Ovary (tissue), 10 donors: ENCODE measurements at regions of chr17 and their contacts with region 1.

Region 1: GRCh38 chr17:60639019-60639330 is 38.7 kb upstream of the BCAS3 start:
- DNase-seq: no peak
- H3K4me3 ChIP-seq: no peak overlapping the region
- H3K27ac ChIP-seq: no peak overlapping the region
- H3K4me1 ChIP-seq: no peaks in the 10 kb centered on the region
- H3K27me3 ChIP-seq: no peaks in the 10 kb centered on the region
- CTCF ChIP-seq: no peak
- EP300 ChIP-seq: no peak
- POLR2A ChIP-seq: no peak

Region 2: GRCh38 chr17:60421273-60421934 is 217.6 kb before region 1 on chr17:
- intact Hi-C with region 1: loop called in 1 of 4 experiments (anchors 5 kb)
- DNase-seq: peak; percentile 53 to 74 (median 70)
- H3K4me3 ChIP-seq: peak overlapping the region; percentile 37
- H3K27ac ChIP-seq: peak overlapping the region in 1 of 2 donors; percentile 17
- H3K4me1 ChIP-seq: no peaks in the 10 kb centered on the region
- H3K27me3 ChIP-seq: no peaks in the 10 kb centered on the region
- CTCF ChIP-seq: peak; percentile 90 to 96 (median 90)
- EP300 ChIP-seq: no peak
- POLR2A ChIP-seq: no peak